Activated CD4-positive, alpha-beta T cell treated with anti-CD3 and anti-CD28 coated beads, Interleukin-2, amount 10 ng/mL, durations not matched to agents 24 days and 14 days (primary cell): ENCODE measurements at regions of chr21 and their contacts with region 1.

Region 1: GRCh38 chr21:39388038-39388810 is 39.3 kb upstream of the HMGN1 start:
- DNase-seq: peak; percentile 96
- H3K4me3 Mint-ChIP-seq: peak overlapping the region; percentile 87
- H3K27ac Mint-ChIP-seq: peak overlapping the region; percentile 91
- H3K4me1 Mint-ChIP-seq: peaks cover 20% of the 10 kb centered on the region
- H3K27me3 Mint-ChIP-seq: no peaks in the 10 kb centered on the region

Region 2: GRCh38 chr21:39445321-39446269 is 57.4 kb after region 1 on chr21 and contains the start of gene LCA5L:
- intact Hi-C with region 1: loop called (anchors 2 kb)
- DNase-seq: peak; percentile 98
- H3K4me3 Mint-ChIP-seq: peak within 1 kb of the TSS; percentile 84
- H3K27ac Mint-ChIP-seq: peak within 1 kb of the TSS; percentile 96
- H3K4me1 Mint-ChIP-seq: peaks cover 14% of the 10 kb centered on the region
- H3K27me3 Mint-ChIP-seq: peaks cover 47% of the 10 kb centered on the region
- total RNA-seq, gene LCA5L: not detected in 2 replicates

Region 3: GRCh38 chr21:39537571-39537970 is 149.3 kb after region 1 on chr21:
- intact Hi-C with region 1: no loop called
- DNase-seq: no peak
- H3K4me3 Mint-ChIP-seq: no peak overlapping the region
- H3K27ac Mint-ChIP-seq: no peak overlapping the region
- H3K4me1 Mint-ChIP-seq: no peaks in the 10 kb centered on the region
- H3K27me3 Mint-ChIP-seq: peaks cover 2% of the 10 kb centered on the region

Region 4: GRCh38 chr21:39575775-39576174 is 187.6 kb after region 1 on chr21:
- intact Hi-C with region 1: no loop called
- DNase-seq: no peak
- H3K4me3 Mint-ChIP-seq: no peak overlapping the region
- H3K27ac Mint-ChIP-seq: no peak overlapping the region
- H3K4me1 Mint-ChIP-seq: no peaks in the 10 kb centered on the region
- H3K27me3 Mint-ChIP-seq: no peaks in the 10 kb centered on the region